AG04449 (cell line): ENCODE measurements at regions of chr11 and their contacts with region 1.

Region 1: GRCh38 chr11:12087075-12088004 is 23.1 kb upstream of the MICAL2 start:
- DNase-seq: no peak
- H3K4me3 ChIP-seq: peak overlapping the region; percentile 46
- CTCF ChIP-seq: peak; percentile 20

Region 2: DNA sequence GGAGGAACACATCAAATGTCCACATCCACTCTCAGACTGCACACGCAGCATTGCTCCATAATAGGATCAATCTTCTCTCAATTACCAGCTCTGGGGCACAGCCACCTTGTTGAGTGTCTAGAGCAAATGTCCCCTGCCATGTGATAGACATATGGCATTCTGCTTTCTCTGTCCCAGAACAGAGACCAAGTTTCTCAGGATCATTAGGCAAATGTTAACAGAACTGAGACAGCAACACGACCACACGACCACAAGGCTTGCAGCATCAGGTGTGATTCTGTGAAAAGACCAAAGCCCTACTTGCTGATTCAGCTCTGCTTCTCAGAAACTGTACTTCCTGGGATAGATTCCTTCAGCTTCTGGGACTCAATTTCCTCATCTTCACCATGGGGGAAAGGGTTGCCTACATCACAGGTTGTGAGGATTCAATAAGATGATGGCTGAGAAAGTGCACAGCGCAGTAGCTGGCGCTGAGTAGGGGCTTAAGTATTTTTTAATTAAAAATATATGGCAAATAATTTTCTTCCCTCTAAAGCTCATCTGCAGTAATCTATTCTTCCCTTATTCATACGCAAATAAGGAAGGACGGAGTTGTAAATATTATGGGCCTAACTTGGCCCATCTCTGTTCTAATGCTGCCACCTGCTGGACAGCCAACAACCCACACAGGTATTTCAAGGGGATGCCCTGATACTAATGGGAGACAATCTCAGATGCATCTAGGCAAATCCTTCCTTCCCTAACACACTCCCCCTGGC is 299.9 kb before region 1 on chr11:
- CTCF ChIA-PET with region 1: no interaction called
- POLR2A ChIA-PET with region 1: no interaction called
- DNase-seq: no peak
- H3K4me3 ChIP-seq: no peak overlapping the region
- CTCF ChIP-seq: peak; percentile 64

Region 3: GRCh38 chr11:12066799-12067508 is 20.4 kb before region 1 on chr11:
- CTCF ChIA-PET with region 1: interaction called, 17 read pairs
- POLR2A ChIA-PET with region 1: interaction called, 9 read pairs
- DNase-seq: no peak
- H3K4me3 ChIP-seq: no peak overlapping the region
- CTCF ChIP-seq: no peak

Region 4: DNA sequence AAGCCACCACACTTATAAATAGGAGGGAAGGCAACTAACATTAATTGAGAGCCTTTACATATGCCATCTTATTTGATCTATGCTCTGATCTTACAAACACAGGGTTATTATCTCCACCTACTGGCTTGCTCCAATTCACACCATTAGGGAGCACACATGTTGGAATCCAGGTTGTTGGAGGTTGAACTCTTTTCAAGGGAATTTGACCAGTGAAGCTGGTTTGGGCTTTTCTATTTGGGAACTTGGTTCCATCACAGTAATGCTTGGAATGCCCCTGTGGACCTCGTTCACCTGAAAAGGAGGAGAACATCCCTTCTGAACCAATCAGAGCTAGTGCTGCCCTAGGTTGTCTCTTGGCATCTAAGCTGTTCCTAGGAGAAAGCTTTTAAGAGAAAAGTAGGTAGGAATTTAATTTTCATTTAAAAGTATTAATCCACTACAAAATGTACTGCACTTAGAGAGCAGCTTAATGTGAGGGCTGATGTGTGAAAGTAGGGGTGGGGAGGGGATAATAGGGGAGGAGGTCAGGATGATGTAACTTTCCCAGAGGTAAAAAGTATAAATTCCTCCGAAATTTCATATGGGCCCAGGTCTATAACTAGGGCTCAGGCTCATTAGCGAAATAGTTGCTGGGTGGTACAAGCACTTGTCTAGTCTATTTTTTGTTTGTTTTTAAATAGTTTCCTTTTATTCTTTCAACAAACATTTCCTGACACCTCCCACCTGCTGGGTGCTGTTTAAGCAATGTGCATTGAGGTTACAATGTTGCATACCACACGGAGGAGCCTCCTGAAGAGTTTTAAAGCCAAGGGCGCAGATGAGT is 15.5 kb after region 1 on chr11:
- CTCF ChIA-PET with region 1: interaction called, 14 read pairs
- POLR2A ChIA-PET with region 1: interaction called, 4 read pairs
- DNase-seq: no peak
- H3K4me3 ChIP-seq: no peak overlapping the region
- CTCF ChIP-seq: no peak

Region 5: GRCh38 chr11:12159351-12160099 is 72.2 kb after region 1 on chr11:
- CTCF ChIA-PET with region 1: interaction called, 4 read pairs
- POLR2A ChIA-PET with region 1: interaction called, 15 read pairs
- DNase-seq: peak; percentile 81
- H3K4me3 ChIP-seq: no peak overlapping the region
- CTCF ChIP-seq: peak; percentile 21

Region 6: GRCh38 chr11:12200279-12201010 is 113.1 kb after region 1 on chr11:
- CTCF ChIA-PET with region 1: interaction called, 4 read pairs
- POLR2A ChIA-PET with region 1: interaction called, 57 read pairs
- DNase-seq: peak; percentile 95
- H3K4me3 ChIP-seq: no peak overlapping the region
- CTCF ChIP-seq: no peak

Region 7: DNA sequence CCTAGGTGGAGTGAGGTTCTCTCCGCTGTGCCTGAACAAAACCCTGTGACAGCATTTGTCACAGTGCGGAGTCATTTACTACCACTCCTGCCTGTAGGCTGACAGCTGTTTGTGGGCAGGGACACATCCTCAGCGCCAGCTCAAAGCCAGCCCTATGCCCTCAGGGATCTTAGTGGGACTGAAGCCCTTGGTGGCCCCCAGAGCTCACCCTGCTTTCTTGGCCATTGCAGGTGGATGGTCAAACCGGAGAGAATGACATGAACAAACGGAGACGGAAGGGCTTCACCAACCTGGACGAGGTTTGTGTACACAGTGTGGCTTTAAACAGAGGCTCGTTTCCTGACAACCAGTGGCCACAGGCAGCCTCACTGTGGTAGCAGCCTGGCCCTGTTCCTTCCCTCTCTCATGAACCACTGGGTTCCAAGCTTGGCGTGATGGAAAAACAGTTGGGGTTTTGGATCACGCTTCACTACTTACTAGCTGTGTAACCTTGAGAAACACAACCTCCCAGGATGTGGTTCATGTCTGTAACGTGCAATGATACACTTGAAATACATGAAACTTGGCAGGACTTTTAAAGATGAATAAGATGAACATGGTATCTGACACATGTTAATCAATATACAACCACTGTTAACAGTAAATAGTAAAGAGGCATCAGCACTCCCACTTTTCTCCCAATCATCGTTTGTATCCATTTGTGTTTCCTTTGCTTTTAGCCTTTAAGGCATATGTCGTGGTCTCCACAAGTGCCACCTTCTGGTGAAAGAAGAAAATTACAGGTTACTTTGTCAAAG is 148.8 kb after region 1 on chr11:
- CTCF ChIA-PET with region 1: interaction called, 25 read pairs
- POLR2A ChIA-PET with region 1: interaction called, 5 read pairs
- DNase-seq: no peak
- H3K4me3 ChIP-seq: no peak overlapping the region
- CTCF ChIP-seq: peak; percentile 46